Dorsolateral prefrontal cortex (tissue), 120 donors: ENCODE measurements at regions of chr7 and their contacts with region 1.

Region 1: GRCh38 chr7:29915481-29916215 is 74.0 kb downstream of the SCRN1 start:
- DNase-seq: peak in 5 of 10 donors; percentile 31 to 69 (median 46)
- H3K4me3 ChIP-seq: no peak overlapping the region
- H3K27ac ChIP-seq: peak overlapping the region in 50 of 59 donors; percentile 10 to 82 (median 60)
- H3K27me3 ChIP-seq: no peaks in the 10 kb centered on the region
- CTCF ChIP-seq: no peak

Region 2: GRCh38 chr7:29806208-29806994 is 109.2 kb before region 1 on chr7 and contains the start of gene WIPF3:
- intact Hi-C with region 1: loop called in 1 of 2 experiments (anchors 5 kb)
- DNase-seq: peak in 4 of 10 donors; percentile 7 to 59 (median 38)
- H3K4me3 ChIP-seq: peak within 1 kb of the TSS; percentile 35 to 82 (median 63)
- H3K27ac ChIP-seq: peak within 1 kb of the TSS in 40 of 59 donors; percentile 3 to 77 (median 54)
- H3K27me3 ChIP-seq: peaks cover 0 to 47% (median 3%) of the 10 kb centered on the region in 45 donors
- CTCF ChIP-seq: no peak
- total RNA-seq, gene WIPF3: 8.8 to 68.3 (median 38.0) TPM